GM10248 (cell line): ENCODE measurements at regions of chr10 and their contacts with region 1.

Region 1: DNA sequence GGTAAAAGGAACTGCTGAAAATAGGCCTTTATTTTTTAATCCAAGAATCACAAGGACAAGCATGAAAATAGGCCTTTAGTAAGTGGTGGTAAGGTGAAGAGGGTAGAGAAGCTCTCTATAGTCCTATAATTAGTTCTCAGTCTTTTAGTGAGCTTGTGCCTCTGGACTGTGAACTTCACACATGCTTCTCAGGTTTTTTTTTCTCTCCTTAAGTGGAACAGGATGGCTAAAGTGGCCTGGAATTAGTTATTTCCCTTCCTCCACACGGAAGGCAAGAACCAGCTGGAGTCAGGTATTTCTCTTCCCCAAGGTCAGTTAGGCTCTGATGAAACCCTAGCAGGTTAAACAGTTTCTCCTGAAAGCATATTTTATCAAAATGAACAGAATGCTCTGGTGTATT is 203.0 kb upstream of the MINDY3 start:
- DNase-seq: no peak
- CTCF ChIP-seq: no peak

Region 2: DNA sequence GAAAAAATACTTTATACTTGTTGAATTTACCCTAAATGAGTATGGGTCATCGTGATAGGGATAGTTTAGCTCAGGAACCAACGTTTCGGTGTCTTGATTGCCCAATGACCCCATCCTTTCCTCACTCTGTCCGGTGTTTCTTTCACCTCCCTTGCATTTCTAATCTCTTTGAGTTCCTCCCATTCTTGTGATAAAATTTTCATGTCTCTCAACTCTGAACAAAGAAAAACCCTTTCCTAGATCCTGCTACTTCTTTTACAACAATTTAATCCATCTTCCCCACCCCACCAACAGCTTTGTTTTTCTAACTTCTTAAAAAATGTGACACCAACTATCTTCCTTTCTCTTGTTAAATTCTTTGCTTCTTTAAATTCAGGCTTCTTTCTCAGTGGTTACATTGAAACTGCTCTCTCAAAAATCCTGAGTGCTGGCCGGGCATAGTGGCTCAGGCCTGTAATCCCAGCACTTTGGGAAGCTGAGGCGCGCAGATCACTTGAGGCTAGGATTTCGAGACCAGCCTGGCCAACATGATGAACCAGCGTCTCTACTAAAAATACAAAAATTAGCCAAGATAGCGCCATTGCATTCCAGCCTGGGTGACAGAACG is 72.7 kb before region 1 on chr10:
- CTCF ChIA-PET with region 1: no interaction called
- POLR2A ChIA-PET with region 1: interaction called, 13 read pairs
- DNase-seq: no peak
- CTCF ChIP-seq: no peak

Region 3: DNA sequence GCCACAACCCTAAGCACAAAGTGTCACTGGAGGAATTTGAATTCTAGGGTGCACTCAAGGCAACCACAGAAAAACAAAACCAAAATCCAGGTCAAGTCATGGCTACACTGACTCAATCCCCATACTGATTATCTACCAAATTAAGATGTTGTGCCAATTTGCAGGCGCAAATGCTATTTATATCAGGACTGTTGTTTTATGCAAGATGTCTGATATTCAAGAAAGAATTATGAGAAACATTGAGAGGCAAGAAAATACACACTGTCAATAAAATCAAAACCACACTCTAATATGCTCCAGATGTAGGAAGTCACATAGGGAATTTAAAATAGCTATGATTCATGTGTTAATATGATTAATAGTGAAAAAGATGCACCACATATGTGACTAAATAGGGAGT is 61.8 kb before region 1 on chr10:
- CTCF ChIA-PET with region 1: no interaction called
- POLR2A ChIA-PET with region 1: no interaction called
- DNase-seq: no peak
- CTCF ChIP-seq: no peak